OCI-LY7 (cell line): ENCODE measurements at regions of chr2 and their contacts with region 1.

Region 1: DNA sequence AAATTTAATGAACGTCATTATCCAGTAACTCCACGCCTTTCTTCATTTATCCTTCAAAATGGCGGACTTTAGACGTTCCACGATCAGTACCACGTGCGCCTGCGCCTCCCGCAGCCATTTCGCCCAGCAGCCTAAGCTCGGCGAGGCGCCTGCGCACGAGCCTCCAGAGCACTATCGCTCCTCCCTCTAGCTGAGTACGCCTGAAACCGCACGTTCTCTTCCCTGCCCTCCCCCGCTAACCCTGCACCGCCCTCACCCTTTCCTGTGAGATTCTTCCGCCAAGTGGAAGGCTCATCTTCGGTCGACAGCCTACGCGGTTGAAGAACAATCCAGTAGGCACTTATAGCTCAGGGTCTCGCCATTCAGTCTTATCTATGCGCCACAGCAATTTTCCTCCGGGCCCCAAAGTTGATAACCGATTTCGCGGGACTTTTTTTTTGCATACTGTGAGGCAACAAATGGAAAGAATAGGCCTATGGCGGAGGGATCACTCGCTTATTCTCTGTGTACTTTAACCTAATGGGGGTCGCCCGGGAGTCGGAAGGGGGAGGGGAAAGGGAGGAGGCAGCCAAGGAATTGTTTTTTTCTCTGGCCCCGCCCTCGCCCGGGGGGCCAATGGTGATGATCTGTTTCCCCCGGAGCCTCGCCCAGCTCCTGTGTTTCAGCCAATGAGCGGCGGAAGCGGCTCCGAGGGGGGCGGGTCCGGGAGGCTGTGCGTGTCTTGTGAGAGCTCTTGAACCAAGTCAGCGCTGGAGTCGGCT is at the start of gene KDM3A:
- DNase-seq: peak; percentile 99
- H3K4me3 ChIP-seq: peak within 1 kb of the TSS; percentile 82
- H3K27ac ChIP-seq: peak within 1 kb of the TSS; percentile 91
- H3K4me1 ChIP-seq: peaks cover 20% of the 10 kb centered on the region
- CTCF ChIP-seq: no peak
- total RNA-seq, gene KDM3A: 14.5 and 30.6 TPM in 2 replicates

Region 2: DNA sequence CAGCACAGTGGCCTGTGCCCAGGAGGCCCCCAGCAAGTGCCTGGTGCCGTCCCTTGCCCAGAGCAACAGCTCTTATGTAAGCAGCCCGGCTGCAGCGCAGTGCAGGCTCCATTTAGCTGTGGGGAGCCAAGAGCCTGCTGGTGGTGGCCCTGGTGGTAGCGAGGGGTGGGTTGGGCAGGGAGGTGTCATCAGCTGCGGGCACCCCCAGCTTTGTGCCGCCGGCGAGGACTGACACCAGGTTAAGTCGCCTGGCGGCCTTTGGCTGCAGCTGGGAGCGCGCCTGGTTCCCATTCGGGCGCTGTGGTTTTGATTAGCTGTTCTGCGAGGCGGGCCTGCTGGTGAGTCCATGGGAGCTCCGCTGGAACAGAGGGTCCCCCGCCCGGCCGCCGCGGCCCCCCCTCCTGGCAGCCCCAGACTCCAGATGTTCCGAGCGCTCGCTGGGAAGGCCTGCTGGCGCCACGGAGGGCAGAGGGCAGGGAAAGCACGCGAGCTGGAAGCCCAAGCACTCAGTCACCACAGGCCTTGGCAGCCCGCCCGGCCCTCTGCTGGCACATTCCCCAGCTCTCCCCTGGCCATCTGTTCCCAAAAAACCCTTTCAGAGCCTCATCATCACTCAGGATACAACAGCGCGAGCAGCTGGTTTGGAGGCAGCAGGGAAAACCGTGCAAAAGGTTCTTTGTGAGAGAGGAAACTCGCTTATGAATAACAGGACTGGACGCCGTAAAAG is 668.6 kb before region 1 on chr2:
- CTCF ChIA-PET with region 1: no interaction called
- POLR2A ChIA-PET with region 1: no interaction called
- intact Hi-C with region 1: no loop called
- DNase-seq: no peak
- H3K4me3 ChIP-seq: no peak overlapping the region
- H3K27ac ChIP-seq: no peak overlapping the region
- H3K4me1 ChIP-seq: no peaks in the 10 kb centered on the region
- CTCF ChIP-seq: no peak

Region 3: GRCh38 chr2:86035883-86036668 is 404.7 kb before region 1 on chr2:
- CTCF ChIA-PET with region 1: no interaction called
- POLR2A ChIA-PET with region 1: no interaction called
- intact Hi-C with region 1: loop called (anchors 2 kb)
- DNase-seq: peak; percentile 94
- H3K4me3 ChIP-seq: peak overlapping the region; percentile 53
- H3K27ac ChIP-seq: peak overlapping the region; percentile 98
- H3K4me1 ChIP-seq: peaks cover 61% of the 10 kb centered on the region
- CTCF ChIP-seq: peak; percentile 67

Region 4: GRCh38 chr2:86195055-86195807 is 245.6 kb before region 1 on chr2 and contains the start of gene IMMT:
- CTCF ChIA-PET with region 1: no interaction called
- POLR2A ChIA-PET with region 1: interaction called, 4 read pairs
- intact Hi-C with region 1: loop called (anchors 2 kb)
- DNase-seq: peak; percentile 96
- H3K4me3 ChIP-seq: peak within 1 kb of the TSS; percentile 95
- H3K27ac ChIP-seq: peak within 1 kb of the TSS; percentile 94
- H3K4me1 ChIP-seq: peaks cover 42% of the 10 kb centered on the region
- CTCF ChIP-seq: no peak
- total RNA-seq, gene IMMT: 77.3 and 82.1 TPM in 2 replicates

Region 5: DNA sequence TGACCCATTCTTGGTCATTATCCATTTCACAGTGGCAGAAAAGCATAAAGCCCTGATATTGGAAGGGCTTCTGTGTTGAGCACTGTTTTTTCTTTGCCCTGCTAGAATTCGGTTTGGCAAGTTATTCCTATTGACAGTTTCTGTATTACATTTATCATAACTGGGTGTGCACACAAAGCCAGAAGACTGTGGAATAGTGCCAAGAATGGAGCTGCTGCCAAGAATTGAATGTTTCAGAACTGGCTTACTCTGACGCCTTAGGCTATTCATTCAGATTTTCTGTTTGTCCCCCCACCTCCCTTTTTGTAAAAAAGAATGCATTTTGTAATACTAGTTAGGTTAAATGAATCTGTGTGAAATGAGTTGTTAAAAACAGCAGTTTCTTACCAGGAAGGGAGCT is 13.0 kb after region 1 on chr2:
- CTCF ChIA-PET with region 1: no interaction called
- POLR2A ChIA-PET with region 1: interaction called, 13 read pairs
- intact Hi-C with region 1: no loop called
- DNase-seq: no peak
- H3K4me3 ChIP-seq: no peak overlapping the region
- H3K27ac ChIP-seq: no peak overlapping the region
- H3K4me1 ChIP-seq: no peaks in the 10 kb centered on the region
- CTCF ChIP-seq: no peak

Region 6: DNA sequence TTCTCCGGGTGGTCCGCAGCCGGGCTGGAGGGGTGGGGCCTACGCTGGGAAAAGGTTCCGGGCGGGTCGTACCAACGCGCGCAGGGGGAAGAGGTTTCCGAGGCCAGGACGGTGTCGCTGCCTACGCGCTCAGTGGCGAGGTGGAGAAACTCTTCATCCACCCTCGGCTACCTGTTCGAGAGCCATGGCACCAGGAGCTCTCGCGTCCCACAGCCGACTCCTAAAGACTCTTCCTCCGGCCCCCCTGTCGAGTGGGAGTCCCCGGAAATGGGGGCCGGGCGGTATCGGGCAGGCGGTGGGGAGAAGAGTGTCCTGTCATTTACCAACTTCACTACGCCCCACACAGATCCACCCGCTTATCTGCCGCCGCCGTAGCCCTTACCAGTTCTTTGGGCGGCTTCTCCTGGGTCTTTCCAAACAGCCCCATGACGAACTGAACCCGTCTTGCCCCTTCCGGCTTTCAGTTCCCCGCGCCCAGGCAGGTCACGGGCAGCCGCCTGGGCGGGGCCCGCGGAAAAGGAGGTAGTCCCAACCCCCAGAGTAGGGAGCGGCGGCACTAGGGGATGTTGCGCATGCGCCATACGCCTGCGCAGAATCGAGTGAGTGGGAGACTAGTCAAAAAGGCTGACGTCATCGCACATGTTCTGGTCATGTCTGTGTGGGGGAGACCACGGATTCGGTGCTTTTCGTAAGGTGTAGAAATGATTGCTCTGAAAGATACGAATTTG is 122.3 kb after region 1 on chr2 and contains the start of gene CHMP3:
- CTCF ChIA-PET with region 1: no interaction called
- POLR2A ChIA-PET with region 1: interaction called, 4 read pairs
- intact Hi-C with region 1: loop called (anchors 1 kb)
- DNase-seq: peak; percentile 98
- H3K4me3 ChIP-seq: peak within 1 kb of the TSS; percentile 88
- H3K27ac ChIP-seq: peak within 1 kb of the TSS; percentile 88
- H3K4me1 ChIP-seq: peaks cover 14% of the 10 kb centered on the region
- CTCF ChIP-seq: no peak
- total RNA-seq, gene CHMP3: 8.5 and 12.8 TPM in 2 replicates

Region 7: DNA sequence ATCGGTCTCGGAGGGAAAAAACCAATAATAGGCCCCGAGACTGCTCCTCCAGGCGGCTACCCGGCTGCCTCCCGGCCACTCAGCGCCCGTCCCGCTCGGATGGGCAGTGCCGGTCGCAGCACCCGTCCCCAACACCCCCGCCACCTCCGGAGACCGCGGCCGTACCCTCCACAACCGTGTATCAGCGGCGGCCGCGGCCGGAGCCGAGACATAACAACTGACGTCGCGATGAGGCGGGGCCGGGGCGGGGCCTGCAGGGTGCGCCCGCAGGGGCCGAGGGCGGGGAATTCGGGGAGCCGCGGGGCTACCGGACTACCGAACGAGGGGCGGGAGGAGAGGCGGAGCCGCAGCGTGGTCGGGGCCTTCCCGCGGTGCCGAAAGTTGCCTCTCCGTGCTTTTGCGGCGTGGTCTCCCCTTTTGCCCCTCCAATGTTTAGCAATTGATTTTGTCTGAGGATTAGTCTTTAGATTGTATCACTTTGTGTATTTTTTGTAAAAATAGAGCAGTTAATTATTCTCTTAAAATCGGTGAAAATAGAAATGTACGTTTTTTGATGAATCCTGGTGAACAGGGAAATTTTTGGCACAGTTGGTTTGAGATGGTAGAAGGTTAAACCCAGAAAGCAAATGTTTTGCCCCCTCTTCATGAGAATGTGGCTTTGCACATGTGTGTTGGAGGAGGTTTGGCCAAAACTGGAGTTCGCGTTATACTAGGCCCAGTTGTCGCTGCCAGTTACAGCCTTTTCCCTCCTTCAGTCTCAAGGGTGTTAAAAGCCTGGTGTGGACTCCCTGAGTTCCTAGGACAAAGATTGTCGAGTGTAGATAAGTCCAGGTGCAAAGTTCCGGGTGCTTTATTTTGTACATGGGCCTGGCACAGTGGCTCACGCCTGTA is 183.1 kb after region 1 on chr2 and contains the start of gene RNF103:
- CTCF ChIA-PET with region 1: interaction called, 6 read pairs
- POLR2A ChIA-PET with region 1: interaction called, 5 read pairs
- intact Hi-C with region 1: loop called (anchors 1 kb)
- DNase-seq: peak; percentile 93
- H3K4me3 ChIP-seq: peak within 1 kb of the TSS; percentile 94
- H3K27ac ChIP-seq: peak within 1 kb of the TSS; percentile 78
- H3K4me1 ChIP-seq: peaks cover 20% of the 10 kb centered on the region
- CTCF ChIP-seq: no peak
- total RNA-seq, gene RNF103: 11.8 and 12.9 TPM in 2 replicates